ENCODE measurements at regions of chr18 and their contacts with region 1.

Region 1: DNA sequence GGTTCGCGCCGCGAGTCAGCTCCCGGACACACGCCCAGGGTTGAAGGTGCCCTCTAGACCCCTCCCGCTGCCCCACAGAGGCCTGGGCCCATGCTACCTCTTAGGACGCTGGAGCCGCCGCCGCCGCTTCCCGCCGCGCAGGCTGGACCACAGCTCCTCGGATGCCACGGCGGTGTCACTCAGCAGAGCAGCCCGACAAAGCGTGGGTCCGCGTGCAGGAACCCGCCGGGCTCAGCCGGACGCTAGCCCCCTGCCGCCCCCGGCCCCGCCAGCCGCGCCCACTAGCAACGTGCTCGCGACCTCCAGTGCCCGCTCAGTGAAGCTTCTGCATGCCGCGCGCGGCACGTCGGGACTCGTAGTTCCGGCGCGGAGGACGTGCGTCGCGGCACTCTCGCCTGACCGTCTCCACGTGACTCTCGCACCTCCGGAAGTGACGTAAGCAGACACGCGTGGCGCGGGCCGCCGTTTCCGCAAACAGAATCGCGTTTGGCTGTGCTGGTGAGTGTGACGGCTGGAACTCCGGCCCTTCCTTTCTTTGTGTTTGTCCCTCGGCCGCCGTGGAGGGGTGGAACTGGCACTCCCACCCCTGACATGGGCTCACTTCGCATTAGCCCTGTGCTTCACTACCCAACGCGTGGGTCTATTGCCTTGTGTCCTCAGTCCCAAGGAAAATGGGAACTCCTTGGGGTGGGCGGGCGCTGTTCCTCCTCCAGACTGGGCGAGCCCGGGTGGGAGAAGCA is at the starts of genes FAM210A and RNMT:
- DNase-seq: peak; percentile 92 to 97 (median 96)
- H3K4me3 ChIP-seq: peak within 1 kb of the TSS; percentile 76 to 84 (median 84)
- H3K4me3 Mint-ChIP-seq: peak within 1 kb of the TSS; percentile 90 to 98
- H3K27ac ChIP-seq: peak within 1 kb of the TSS; percentile 90 to 99
- H3K27ac Mint-ChIP-seq: peak within 1 kb of the TSS; percentile 98 to 100 (median 99)
- H3K4me1 ChIP-seq: peaks cover 15 to 25% of the 10 kb centered on the region in 2 donors
- H3K4me1 Mint-ChIP-seq: peaks cover 33% of the 10 kb centered on the region
- H3K27me3 ChIP-seq: no peaks in the 10 kb centered on the region
- H3K27me3 Mint-ChIP-seq: no peaks in the 10 kb centered on the region
- CTCF ChIP-seq: no peak
- polyA plus RNA-seq, gene FAM210A: 2.8 to 6.9 (median 6.9) TPM
- polyA plus RNA-seq, gene RNMT: 12.9 to 36.4 (median 32.6) TPM

Region 2: GRCh38 chr18:12702221-12703095 is 1023.9 kb before region 1 on chr18 and contains the starts of genes CEP76 and PSMG2:
- intact Hi-C with region 1: loop called in 1 of 2 experiments (anchors 5 kb)
- DNase-seq: peak; percentile 72 to 79 (median 74)
- H3K4me3 ChIP-seq: peak within 1 kb of the TSS; percentile 84 to 89 (median 89)
- H3K4me3 Mint-ChIP-seq: peak within 1 kb of the TSS; percentile 98 to 99
- H3K27ac ChIP-seq: peak within 1 kb of the TSS; percentile 90 to 95
- H3K27ac Mint-ChIP-seq: peak within 1 kb of the TSS; percentile 98 to 100 (median 99)
- H3K4me1 ChIP-seq: peaks cover 22 to 32% of the 10 kb centered on the region in 2 donors
- H3K4me1 Mint-ChIP-seq: peaks cover 31% of the 10 kb centered on the region
- H3K27me3 ChIP-seq: no peaks in the 10 kb centered on the region
- H3K27me3 Mint-ChIP-seq: no peaks in the 10 kb centered on the region
- CTCF ChIP-seq: no peak
- polyA plus RNA-seq, gene CEP76: 2.7 to 3.4 (median 3.0) TPM
- polyA plus RNA-seq, gene PSMG2: 37.1 to 143 (median 118) TPM

Region 3: GRCh38 chr18:12883684-12884405 is 842.6 kb before region 1 on chr18 and contains the start of gene PTPN2:
- intact Hi-C with region 1: loop called in 1 of 2 experiments (anchors 10 kb)
- DNase-seq: peak; percentile 95 to 96 (median 96)
- H3K4me3 ChIP-seq: peak within 1 kb of the TSS; percentile 69 to 96 (median 83)
- H3K4me3 Mint-ChIP-seq: peak within 1 kb of the TSS; percentile 90 to 94
- H3K27ac ChIP-seq: peak within 1 kb of the TSS; percentile 97 to 98
- H3K27ac Mint-ChIP-seq: peak within 1 kb of the TSS; percentile 92 to 97 (median 96)
- H3K4me1 ChIP-seq: peaks cover 58 to 62% of the 10 kb centered on the region in 2 donors
- H3K4me1 Mint-ChIP-seq: peaks cover 63% of the 10 kb centered on the region
- H3K27me3 ChIP-seq: no peaks in the 10 kb centered on the region
- H3K27me3 Mint-ChIP-seq: no peaks in the 10 kb centered on the region
- CTCF ChIP-seq: no peak
- polyA plus RNA-seq, gene PTPN2: 55.6 to 108 (median 78.4) TPM

Region 4: DNA sequence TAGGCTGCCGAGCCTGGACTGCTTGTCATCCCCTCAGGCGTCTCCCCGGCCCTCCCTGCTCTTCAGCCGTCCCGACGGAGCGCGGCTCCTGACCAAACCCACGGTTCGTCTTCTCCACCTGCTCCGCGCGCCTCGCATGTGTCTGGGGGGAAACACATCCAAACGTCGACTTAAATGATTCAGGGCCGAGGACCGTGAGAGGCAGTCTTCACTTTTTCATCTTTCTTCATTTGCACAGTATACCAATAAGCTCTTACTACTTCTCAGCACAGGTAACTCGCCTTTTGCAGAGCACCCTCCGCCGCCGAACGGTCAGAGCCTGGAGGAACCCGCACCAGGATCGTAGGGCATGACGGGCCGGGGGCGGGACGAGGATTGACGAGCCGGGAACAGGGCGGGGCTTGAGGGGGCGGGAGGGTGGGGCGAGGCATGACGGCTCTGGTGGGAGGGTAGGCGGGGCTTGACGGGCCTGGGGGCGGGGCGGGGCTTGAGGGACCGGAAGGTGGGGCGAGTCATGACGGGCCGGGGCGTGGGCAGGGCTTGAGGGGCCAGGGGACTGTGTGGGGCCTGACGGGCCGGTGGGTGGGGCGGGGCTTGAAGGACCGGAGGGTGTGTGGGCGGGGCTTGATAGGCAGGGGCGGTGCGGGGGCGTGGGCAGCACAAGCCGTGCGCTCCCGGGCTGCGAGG is 778.9 kb before region 1 on chr18 and contains the start of gene SEH1L:
- intact Hi-C with region 1: loop called in 1 of 2 experiments (anchors 5 kb)
- DNase-seq: peak; percentile 96 to 99 (median 98)
- H3K4me3 ChIP-seq: peak within 1 kb of the TSS; percentile 70 to 92 (median 80)
- H3K4me3 Mint-ChIP-seq: peak within 1 kb of the TSS; percentile 89 to 99
- H3K27ac ChIP-seq: peak within 1 kb of the TSS; percentile 90 to 93
- H3K27ac Mint-ChIP-seq: peak within 1 kb of the TSS; percentile 95 to 99 (median 99)
- H3K4me1 ChIP-seq: peaks cover 14 to 21% of the 10 kb centered on the region in 2 donors
- H3K4me1 Mint-ChIP-seq: peaks cover 22% of the 10 kb centered on the region
- H3K27me3 ChIP-seq: no peaks in the 10 kb centered on the region
- H3K27me3 Mint-ChIP-seq: peaks cover 0 to 5% (median 0%) of the 10 kb centered on the region in 3 donors
- CTCF ChIP-seq: no peak
- polyA plus RNA-seq, gene SEH1L: 7.1 to 26.9 (median 25.9) TPM

Region 5: DNA sequence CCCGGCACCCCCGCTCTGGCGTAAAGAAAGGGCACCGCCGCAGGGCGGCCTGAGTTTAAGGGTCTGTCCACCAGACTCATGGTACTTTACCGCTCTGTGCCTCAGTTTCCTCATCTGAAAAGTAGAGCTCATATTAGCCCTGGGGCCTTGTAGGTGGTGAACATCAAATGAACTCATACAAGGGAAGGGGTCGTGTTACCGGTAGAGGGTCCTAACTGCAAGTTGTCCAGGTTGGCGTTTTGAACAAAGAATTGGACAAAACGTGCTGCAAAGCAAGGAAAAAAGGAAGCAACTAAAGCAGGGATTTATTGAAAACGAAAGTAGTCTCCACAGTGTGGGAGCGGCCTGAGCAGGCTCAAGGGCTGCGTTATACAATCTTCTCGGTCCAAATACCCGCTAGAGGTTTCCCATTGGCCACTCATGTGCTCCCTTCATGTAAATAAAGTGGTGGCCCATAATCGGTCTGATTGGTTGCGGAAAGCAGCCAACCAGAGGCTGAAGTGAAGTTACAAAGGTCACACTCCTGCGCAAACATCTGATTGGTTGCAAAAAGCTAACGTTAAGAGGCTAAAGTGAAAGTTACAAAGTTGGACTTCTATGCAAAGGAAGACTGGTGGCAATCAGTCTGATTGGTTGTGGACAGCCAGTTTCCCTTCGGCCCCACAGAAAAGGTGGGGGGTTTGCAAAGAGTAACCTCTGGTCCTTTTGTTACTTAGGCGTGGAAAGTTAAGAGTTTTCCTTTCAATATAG is 588.6 kb before region 1 on chr18:
- intact Hi-C with region 1: loop called in 1 of 2 experiments (anchors 5 kb)
- DNase-seq: peak; percentile 92 to 94 (median 93)
- H3K4me3 ChIP-seq: peak overlapping the region; percentile 53 to 95 (median 82)
- H3K4me3 Mint-ChIP-seq: peak overlapping the region; percentile 96 to 100
- H3K27ac ChIP-seq: peak overlapping the region; percentile 78 to 91
- H3K27ac Mint-ChIP-seq: peak overlapping the region; percentile 92 to 100 (median 99)
- H3K4me1 ChIP-seq: peaks cover 20 to 22% of the 10 kb centered on the region in 2 donors
- H3K4me1 Mint-ChIP-seq: peaks cover 24% of the 10 kb centered on the region
- H3K27me3 ChIP-seq: peaks cover 0 to 18% of the 10 kb centered on the region in 2 donors
- H3K27me3 Mint-ChIP-seq: peaks cover 13 to 32% (median 21%) of the 10 kb centered on the region in 3 donors
- CTCF ChIP-seq: no peak

Region 6: GRCh38 chr18:13216092-13216582 is 510.3 kb before region 1 on chr18:
- intact Hi-C with region 1: loop called in 1 of 2 experiments (anchors 5 kb)
- DNase-seq: peak; percentile 79 to 95 (median 91)
- H3K4me3 ChIP-seq: peak overlapping the region; percentile 35 to 83 (median 36)
- H3K4me3 Mint-ChIP-seq: peak overlapping the region; percentile 84 to 87
- H3K27ac ChIP-seq: peak overlapping the region in 1 of 2 donors; percentile 38
- H3K27ac Mint-ChIP-seq: peak overlapping the region; percentile 75 to 93 (median 83)
- H3K4me1 ChIP-seq: peaks cover 43 to 52% of the 10 kb centered on the region in 2 donors
- H3K4me1 Mint-ChIP-seq: peaks cover 51% of the 10 kb centered on the region
- H3K27me3 ChIP-seq: peaks cover 0 to 2% of the 10 kb centered on the region in 2 donors
- H3K27me3 Mint-ChIP-seq: peaks cover 14 to 19% (median 14%) of the 10 kb centered on the region in 3 donors
- CTCF ChIP-seq: peak; percentile 58

Region 7: DNA sequence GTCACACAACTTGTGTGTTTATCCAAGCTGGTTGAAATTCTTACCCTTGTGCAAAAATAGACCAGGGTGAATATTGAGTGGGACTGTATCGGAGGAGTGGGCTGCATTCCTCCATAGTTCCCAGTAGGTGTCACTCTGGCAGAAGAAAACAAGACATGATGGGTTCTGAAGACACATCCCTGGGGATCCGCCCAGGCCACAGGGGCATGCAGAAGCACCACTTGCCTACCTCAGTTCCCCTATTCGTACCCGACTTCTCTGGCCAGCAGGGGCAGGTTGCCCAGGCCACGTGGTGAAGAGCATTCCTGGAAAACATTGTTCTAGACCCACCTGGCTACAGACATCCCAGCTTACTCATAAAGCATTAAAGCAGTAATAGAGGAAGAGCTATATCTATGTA is 168.3 kb before region 1 on chr18:
- intact Hi-C with region 1: loop called in 1 of 2 experiments (anchors 5 kb)
- DNase-seq: peak; percentile 59 to 81 (median 71)
- H3K4me3 ChIP-seq: no peak overlapping the region
- H3K4me3 Mint-ChIP-seq: no peak overlapping the region
- H3K27ac ChIP-seq: no peak overlapping the region
- H3K27ac Mint-ChIP-seq: peak overlapping the region; percentile 10 to 89 (median 75)
- H3K4me1 ChIP-seq: peaks cover 24 to 26% of the 10 kb centered on the region in 2 donors
- H3K4me1 Mint-ChIP-seq: peaks cover 28% of the 10 kb centered on the region
- H3K27me3 ChIP-seq: no peaks in the 10 kb centered on the region
- H3K27me3 Mint-ChIP-seq: peaks cover 0 to 3% (median 2%) of the 10 kb centered on the region in 3 donors
- CTCF ChIP-seq: peak; percentile 87

Region 8: GRCh38 chr18:13688191-13689136 is 37.9 kb before region 1 on chr18:
- intact Hi-C with region 1: no loop called
- DNase-seq: no peak
- H3K4me3 ChIP-seq: no peak overlapping the region
- H3K4me3 Mint-ChIP-seq: no peak overlapping the region
- H3K27ac ChIP-seq: no peak overlapping the region
- H3K27ac Mint-ChIP-seq: peak overlapping the region in 1 of 7 donors; percentile 21
- H3K4me1 ChIP-seq: no peaks in the 10 kb centered on the region
- H3K4me1 Mint-ChIP-seq: no peaks in the 10 kb centered on the region
- H3K27me3 ChIP-seq: no peaks in the 10 kb centered on the region
- H3K27me3 Mint-ChIP-seq: no peaks in the 10 kb centered on the region
- CTCF ChIP-seq: no peak